Activated CD4-positive, alpha-beta memory T cell treated with anti-CD3 and anti-CD28 coated beads for 36 hours (primary cell): ENCODE measurements at regions of chr3 and their contacts with region 1.

Region 1: GRCh38 chr3:111616417-111617105 is 21.4 kb upstream of the ZBED2 start:
- DNase-seq: peak; percentile 89
- H3K4me3 Mint-ChIP-seq: peak overlapping the region; percentile 49
- H3K27ac Mint-ChIP-seq: peak overlapping the region; percentile 92
- H3K4me1 Mint-ChIP-seq: peaks cover 77% of the 10 kb centered on the region
- H3K27me3 Mint-ChIP-seq: no peaks in the 10 kb centered on the region

Region 2: GRCh38 chr3:111071257-111072015 is 545.1 kb before region 1 on chr3 and contains the start of gene NECTIN3:
- CTCF ChIA-PET with region 1: no interaction called
- POLR2A ChIA-PET with region 1: no interaction called
- intact Hi-C with region 1: loop called (anchors 2 kb)
- DNase-seq: peak; percentile 92
- H3K4me3 Mint-ChIP-seq: peak within 1 kb of the TSS; percentile 91
- H3K27ac Mint-ChIP-seq: peak within 1 kb of the TSS; percentile 75
- H3K4me1 Mint-ChIP-seq: peaks cover 41% of the 10 kb centered on the region
- H3K27me3 Mint-ChIP-seq: peaks cover 20% of the 10 kb centered on the region
- total RNA-seq, gene NECTIN3: 10.5 to 11.3 TPM

Region 3: DNA sequence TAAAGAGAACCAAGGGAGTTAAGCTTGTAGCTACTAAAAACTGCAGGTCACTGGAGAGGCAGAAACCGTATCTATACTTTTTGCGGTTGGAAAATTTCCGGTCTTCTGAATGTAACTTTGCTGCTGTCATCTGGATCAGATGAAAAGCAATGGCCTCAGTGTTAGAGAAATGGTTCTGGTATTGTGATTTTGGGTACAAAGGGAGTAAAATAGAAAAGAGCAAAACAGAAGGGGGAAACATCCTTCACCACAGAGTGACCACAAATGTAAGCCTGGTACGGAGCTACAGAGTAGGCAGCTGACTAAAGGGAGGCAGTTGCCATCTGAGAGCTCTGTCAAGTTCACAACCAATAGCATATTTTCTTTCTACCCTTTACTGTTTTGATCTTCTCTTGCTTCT is 68.9 kb before region 1 on chr3:
- CTCF ChIA-PET with region 1: interaction called, 48 read pairs
- POLR2A ChIA-PET with region 1: interaction called, 21 read pairs
- intact Hi-C with region 1: loop called (anchors 1 kb)
- DNase-seq: peak; percentile 71
- H3K4me3 Mint-ChIP-seq: no peak overlapping the region
- H3K27ac Mint-ChIP-seq: no peak overlapping the region
- H3K4me1 Mint-ChIP-seq: peaks cover 43% of the 10 kb centered on the region
- H3K27me3 Mint-ChIP-seq: no peaks in the 10 kb centered on the region

Region 4: DNA sequence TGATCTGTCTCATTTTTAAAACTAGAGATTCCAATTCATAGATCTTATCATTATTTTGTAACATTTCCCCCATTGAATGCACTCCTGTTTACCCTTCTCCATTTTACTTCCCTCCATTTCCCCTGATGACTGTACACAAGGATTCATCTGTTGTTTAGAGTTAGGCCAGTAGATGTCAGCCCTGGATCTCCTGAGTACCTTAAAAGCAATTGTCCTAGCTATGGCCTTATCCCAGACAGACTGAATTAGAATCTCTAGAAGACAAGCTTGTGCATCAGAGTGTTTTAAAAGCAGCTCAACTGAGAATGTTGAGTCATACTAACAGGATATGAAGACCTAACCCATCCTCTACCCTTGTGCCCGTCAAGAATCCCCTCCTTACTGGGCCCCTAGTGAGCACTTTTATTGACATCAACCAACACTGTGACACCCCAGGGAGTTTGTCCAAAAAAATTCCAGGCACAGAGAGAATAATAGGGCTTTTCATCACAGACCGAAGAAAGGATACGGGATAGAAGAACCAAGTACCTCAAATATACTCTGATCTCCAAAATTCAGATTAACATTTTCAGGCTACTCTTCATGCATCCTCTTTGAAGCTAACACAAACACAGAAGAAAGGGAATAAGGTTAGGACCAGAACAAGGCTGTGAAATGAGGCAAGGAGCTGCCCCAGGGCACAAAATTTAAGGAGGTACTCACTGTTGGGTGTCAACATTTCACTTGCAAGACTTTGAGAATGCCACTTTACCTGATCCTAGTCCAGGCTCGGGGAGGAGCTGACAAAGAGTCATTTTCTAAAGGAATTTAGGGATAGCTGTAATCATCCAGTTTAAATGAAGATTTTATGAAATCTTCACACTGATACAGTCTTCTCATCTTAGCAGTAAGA is 38.5 kb before region 1 on chr3:
- CTCF ChIA-PET with region 1: interaction called, 128 read pairs
- POLR2A ChIA-PET with region 1: interaction called, 18 read pairs
- intact Hi-C with region 1: loop called (anchors 1 kb)
- DNase-seq: no peak
- H3K4me3 Mint-ChIP-seq: peak overlapping the region; percentile 35
- H3K27ac Mint-ChIP-seq: peak overlapping the region; percentile 83
- H3K4me1 Mint-ChIP-seq: peaks cover 73% of the 10 kb centered on the region
- H3K27me3 Mint-ChIP-seq: no peaks in the 10 kb centered on the region

Region 5: DNA sequence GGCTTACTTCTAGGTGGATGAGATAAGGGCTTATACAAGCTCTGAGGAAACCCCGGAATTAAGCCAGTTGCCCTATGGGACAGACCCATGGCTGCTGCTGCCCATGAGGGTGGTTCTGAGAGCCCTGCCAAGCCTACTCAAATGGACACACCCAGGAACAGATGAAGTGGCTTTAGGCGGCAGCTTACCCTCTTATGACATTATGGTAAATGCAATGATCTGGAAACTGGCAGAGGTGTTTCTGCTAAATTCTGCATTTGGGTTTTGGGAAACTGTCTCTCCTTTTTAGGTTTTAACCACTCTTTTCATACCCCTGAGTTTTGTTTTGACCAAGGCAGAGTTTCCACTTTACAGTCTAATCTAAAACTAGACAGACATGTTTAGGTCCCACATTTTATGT is 12.4 kb before region 1 on chr3:
- CTCF ChIA-PET with region 1: interaction called, 67 read pairs
- POLR2A ChIA-PET with region 1: interaction called, 55 read pairs
- intact Hi-C with region 1: loop called (anchors 1 kb)
- DNase-seq: peak; percentile 71
- H3K4me3 Mint-ChIP-seq: peak overlapping the region; percentile 62
- H3K27ac Mint-ChIP-seq: peak overlapping the region; percentile 92
- H3K4me1 Mint-ChIP-seq: peaks cover 87% of the 10 kb centered on the region
- H3K27me3 Mint-ChIP-seq: no peaks in the 10 kb centered on the region

Region 6: GRCh38 chr3:111691293-111691909 is 74.8 kb after region 1 on chr3:
- CTCF ChIA-PET with region 1: interaction called, 10 read pairs
- POLR2A ChIA-PET with region 1: interaction called, 3 read pairs
- intact Hi-C with region 1: no loop called
- DNase-seq: no peak
- H3K4me3 Mint-ChIP-seq: no peak overlapping the region
- H3K27ac Mint-ChIP-seq: no peak overlapping the region
- H3K4me1 Mint-ChIP-seq: peaks cover 38% of the 10 kb centered on the region
- H3K27me3 Mint-ChIP-seq: no peaks in the 10 kb centered on the region